ENCODE measurements at regions of chr6 and their contacts with region 1.

Region 1: DNA sequence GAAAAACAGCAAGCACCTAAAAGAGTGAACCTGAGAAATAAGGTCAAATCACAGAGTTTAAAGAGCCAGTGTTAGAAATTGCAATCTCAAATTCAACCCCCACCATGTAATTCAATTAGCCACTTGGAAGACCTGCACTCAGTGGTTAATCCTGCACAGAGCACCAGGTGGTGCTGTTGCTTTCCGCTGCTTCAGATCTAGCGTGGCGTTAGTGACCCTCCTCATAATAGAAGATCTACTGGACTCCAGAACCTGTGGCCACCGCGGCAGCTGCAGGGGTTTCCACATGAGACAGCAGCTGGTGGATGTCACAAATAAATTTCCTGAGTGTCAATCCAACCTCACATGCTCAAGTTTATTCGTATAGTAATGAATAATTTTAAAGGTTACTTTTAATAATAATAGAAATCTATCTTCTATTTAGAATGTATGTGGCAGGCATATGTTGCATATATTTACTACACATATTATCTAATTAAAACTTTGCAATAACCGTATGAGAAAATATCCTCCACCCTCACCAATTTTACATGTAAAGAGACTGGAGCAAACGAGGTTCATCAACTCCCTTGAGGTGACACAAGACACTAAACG is 84.4 kb downstream of the SYNE1 start:
- DNase-seq: peak; percentile 73
- H3K4me3 Mint-ChIP-seq: no peak overlapping the region
- H3K27ac Mint-ChIP-seq: no peak overlapping the region
- H3K4me1 Mint-ChIP-seq: no peaks in the 10 kb centered on the region
- H3K27me3 Mint-ChIP-seq: peaks cover 2% of the 10 kb centered on the region

Region 2: GRCh38 chr6:152329638-152330448 is 222.9 kb before region 1 on chr6:
- intact Hi-C with region 1: no loop called
- DNase-seq: peak; percentile 41
- H3K4me3 Mint-ChIP-seq: no peak overlapping the region
- H3K27ac Mint-ChIP-seq: no peak overlapping the region
- H3K4me1 Mint-ChIP-seq: no peaks in the 10 kb centered on the region
- H3K27me3 Mint-ChIP-seq: peaks cover 15% of the 10 kb centered on the region

Region 3: GRCh38 chr6:152669895-152670294 is 117.2 kb after region 1 on chr6:
- intact Hi-C with region 1: loop called (anchors 10 kb)
- DNase-seq: no peak
- H3K4me3 Mint-ChIP-seq: no peak overlapping the region
- H3K27ac Mint-ChIP-seq: no peak overlapping the region
- H3K4me1 Mint-ChIP-seq: no peaks in the 10 kb centered on the region
- H3K27me3 Mint-ChIP-seq: peaks cover 3% of the 10 kb centered on the region

Measured in activated CD4-positive, alpha-beta T cell treated with anti-CD3 and anti-CD28 coated beads, Interleukin-2, amount 10 ng/mL, durations not matched to agents 24 days and 14 days (primary cell).